Activated T-helper 2 cell treated with anti-CD3 and anti-CD28 coated beads, Interferon-gamma antibody, Interleukin-2, Interleukin-4, amounts not matched to agents 10 μg/mL and 5 μg/mL and 100 μg/mL, durations not matched to agents 14 hours and 24 hours and 36 hours (primary cell): ENCODE measurements at regions of chr10 and their contacts with region 1.

Region 1: DNA sequence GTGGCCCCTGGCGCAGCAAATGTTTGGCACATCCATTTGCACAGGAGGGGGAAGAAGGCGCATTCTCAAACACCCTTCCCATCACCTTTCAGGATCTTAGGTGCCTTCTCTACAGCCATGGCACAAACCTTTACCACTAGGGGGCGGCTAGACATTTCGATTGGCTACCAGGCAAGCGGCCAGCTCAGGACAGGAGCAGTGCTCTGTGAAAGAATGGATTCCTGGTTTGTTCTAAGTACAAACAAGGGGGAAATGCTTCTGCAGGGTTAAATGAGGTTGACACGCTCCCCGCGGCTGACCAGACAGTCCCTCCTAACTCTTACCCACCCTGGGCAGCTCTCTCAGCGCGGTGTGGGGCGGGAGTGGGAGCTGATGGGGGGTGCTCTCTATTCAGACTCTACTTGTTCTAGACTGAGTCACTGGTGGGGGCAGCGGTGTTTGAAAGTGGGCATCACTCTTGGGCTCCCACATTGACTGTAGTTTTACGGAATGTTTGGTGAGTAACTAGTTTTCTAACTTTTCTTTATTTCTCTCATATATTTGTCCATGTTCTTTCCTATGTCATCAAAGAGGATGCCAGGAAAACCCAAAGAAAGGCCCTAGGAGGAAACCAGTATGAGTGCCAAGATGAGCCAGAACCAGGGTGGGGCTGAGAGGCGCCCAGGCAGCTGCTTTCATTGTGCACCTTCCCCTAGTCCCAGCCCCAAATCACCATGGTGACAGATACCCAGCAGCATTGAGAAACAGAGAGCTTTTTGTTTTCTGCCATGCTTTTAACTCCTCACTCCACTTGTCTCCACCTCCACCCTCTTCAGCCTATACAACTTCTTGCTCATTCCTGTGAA is 61.4 kb upstream of the GPR158 start:
- DNase-seq: peak; percentile 13
- H3K4me3 Mint-ChIP-seq: no peak overlapping the region
- H3K27ac Mint-ChIP-seq: no peak overlapping the region
- H3K4me1 Mint-ChIP-seq: no peaks in the 10 kb centered on the region
- H3K27me3 Mint-ChIP-seq: peaks cover 1% of the 10 kb centered on the region

Region 2: GRCh38 chr10:25130906-25131305 is 17.5 kb after region 1 on chr10:
- intact Hi-C with region 1: no loop called
- DNase-seq: no peak
- H3K4me3 Mint-ChIP-seq: no peak overlapping the region
- H3K27ac Mint-ChIP-seq: no peak overlapping the region
- H3K4me1 Mint-ChIP-seq: no peaks in the 10 kb centered on the region
- H3K27me3 Mint-ChIP-seq: no peaks in the 10 kb centered on the region

Region 3: GRCh38 chr10:25226775-25227682 is 113.6 kb after region 1 on chr10:
- intact Hi-C with region 1: loop called (anchors 1 kb)
- DNase-seq: no peak
- H3K4me3 Mint-ChIP-seq: no peak overlapping the region
- H3K27ac Mint-ChIP-seq: no peak overlapping the region
- H3K4me1 Mint-ChIP-seq: no peaks in the 10 kb centered on the region
- H3K27me3 Mint-ChIP-seq: no peaks in the 10 kb centered on the region